Sciatic nerve (tissue), 2 donors: ENCODE measurements at regions of chr1 and their contacts with region 1.

Region 1: GRCh38 chr1:242651817-242652216 is 127.3 kb upstream of the PLD5 start:
- DNase-seq: no peak
- ATAC-seq: no peak

Region 2: GRCh38 chr1:242081446-242081845 is 570.4 kb before region 1 on chr1:
- intact Hi-C with region 1: no loop called
- DNase-seq: no peak
- ATAC-seq: no peak

Region 3: GRCh38 chr1:243332440-243332839 is 680.6 kb after region 1 on chr1:
- intact Hi-C with region 1: loop called (anchors 5 kb)
- DNase-seq: no peak
- ATAC-seq: no peak